ENCODE measurements at regions of chr20 and their contacts with region 1.

Region 1: DNA sequence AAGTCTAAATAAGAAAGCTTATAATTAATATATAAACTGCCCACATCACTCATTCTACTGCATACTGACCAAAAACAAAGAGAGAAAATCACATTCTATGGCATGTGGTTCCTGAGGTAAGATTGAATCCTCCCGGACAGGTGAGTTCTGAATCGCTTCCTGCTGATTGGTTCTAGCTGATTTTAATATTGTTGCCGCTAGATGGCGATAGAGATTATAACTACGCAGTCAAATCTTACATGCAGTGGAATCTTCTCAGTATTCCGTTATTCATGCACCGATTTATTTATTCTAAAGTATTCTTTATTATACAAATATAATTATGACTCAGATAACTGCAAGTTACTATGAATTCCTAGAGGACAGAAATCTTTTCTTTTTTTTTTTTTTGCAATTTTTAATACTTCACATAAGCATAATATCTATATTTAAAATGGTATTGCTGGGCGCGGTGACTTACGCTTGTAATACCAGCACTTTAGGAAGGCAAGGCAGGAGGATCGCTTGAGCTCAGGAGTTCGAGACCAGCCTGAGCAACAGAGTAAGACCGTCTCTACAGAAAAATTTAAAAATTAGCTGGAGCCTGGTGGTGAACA is 24.2 kb upstream of the TMX4 start:
- DNase-seq: peak; percentile 56
- H3K4me3 ChIP-seq: no peak overlapping the region
- H3K27ac ChIP-seq: no peak overlapping the region
- H3K4me1 ChIP-seq: peaks cover 24% of the 10 kb centered on the region
- H3K27me3 ChIP-seq: no peaks in the 10 kb centered on the region
- CTCF ChIP-seq: peak; percentile 38 to 50
- POLR2A ChIP-seq: no peak

Region 2: GRCh38 chr20:7897781-7898364 is 145.9 kb before region 1 on chr20:
- CTCF ChIA-PET with region 1: no interaction called
- POLR2A ChIA-PET with region 1: no interaction called
- dilution Hi-C with region 1: no loop called
- intact Hi-C with region 1: no loop called
- DNase-seq: no peak
- H3K4me3 ChIP-seq: no peak overlapping the region
- H3K27ac ChIP-seq: no peak overlapping the region
- H3K4me1 ChIP-seq: no peaks in the 10 kb centered on the region
- H3K27me3 ChIP-seq: no peaks in the 10 kb centered on the region
- CTCF ChIP-seq: no peak
- POLR2A ChIP-seq: no peak

Region 3: DNA sequence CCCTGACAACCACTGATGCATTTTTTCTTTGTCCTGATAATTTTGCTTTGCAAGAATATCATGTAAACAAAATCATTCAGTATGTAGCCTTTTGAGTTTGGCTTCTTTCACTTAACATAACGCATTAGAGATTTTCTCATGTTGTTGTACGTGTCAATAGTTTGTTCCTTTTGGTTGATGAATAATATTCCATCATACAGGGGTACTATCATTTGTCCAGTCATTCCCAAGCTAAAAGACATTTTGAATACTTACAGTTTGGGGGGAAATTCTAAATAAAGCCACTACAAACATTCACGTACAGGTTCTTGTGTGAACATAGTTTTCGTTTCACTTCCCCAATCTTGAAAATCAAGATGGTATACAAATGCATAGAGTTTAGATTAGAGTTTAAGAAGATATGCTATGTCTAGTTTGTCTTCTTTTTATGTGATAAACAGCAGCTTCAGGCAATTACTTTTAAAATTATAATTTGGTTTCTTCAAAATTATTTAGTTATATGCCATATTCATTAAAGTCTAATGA is 108.7 kb before region 1 on chr20:
- CTCF ChIA-PET with region 1: interaction called, 28 read pairs
- POLR2A ChIA-PET with region 1: no interaction called
- dilution Hi-C with region 1: no loop called
- intact Hi-C with region 1: no loop called
- DNase-seq: no peak
- H3K4me3 ChIP-seq: no peak overlapping the region
- H3K27ac ChIP-seq: no peak overlapping the region
- H3K4me1 ChIP-seq: peaks cover 10% of the 10 kb centered on the region
- H3K27me3 ChIP-seq: no peaks in the 10 kb centered on the region
- CTCF ChIP-seq: no peak
- POLR2A ChIP-seq: no peak

Region 4: DNA sequence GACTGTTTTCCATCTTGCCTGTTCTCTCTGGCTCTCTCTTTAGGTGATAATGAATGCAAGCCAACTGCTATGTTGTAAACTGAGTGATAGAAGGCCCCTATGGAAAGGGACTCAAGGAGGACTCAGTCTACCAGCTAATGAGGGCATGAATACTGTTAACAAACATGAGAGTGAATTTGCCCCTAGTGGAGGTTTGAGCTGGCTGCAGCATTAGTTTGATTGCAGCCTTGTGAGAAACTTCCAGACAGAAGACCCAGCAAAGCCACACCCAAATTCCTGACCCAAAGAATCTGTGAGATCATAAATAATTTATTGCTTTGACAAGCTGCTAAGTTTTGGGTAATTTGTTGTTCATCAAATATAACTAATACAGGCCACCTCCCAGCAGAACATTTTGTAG is 38.2 kb after region 1 on chr20:
- CTCF ChIA-PET with region 1: interaction called, 10 read pairs
- POLR2A ChIA-PET with region 1: no interaction called
- dilution Hi-C with region 1: no loop called
- intact Hi-C with region 1: no loop called
- DNase-seq: no peak
- H3K4me3 ChIP-seq: no peak overlapping the region
- H3K27ac ChIP-seq: no peak overlapping the region
- H3K4me1 ChIP-seq: peaks cover 12% of the 10 kb centered on the region
- H3K27me3 ChIP-seq: no peaks in the 10 kb centered on the region
- CTCF ChIP-seq: peak; percentile 15 to 23
- POLR2A ChIP-seq: no peak

Region 5: GRCh38 chr20:8389381-8390036 is 345.7 kb after region 1 on chr20:
- CTCF ChIA-PET with region 1: interaction called, 57 read pairs
- POLR2A ChIA-PET with region 1: interaction called, 4 read pairs
- dilution Hi-C with region 1: no loop called
- intact Hi-C with region 1: loop called (anchors 2 kb)
- DNase-seq: peak; percentile 61
- H3K4me3 ChIP-seq: no peak overlapping the region
- H3K27ac ChIP-seq: no peak overlapping the region
- H3K4me1 ChIP-seq: peaks cover 3% of the 10 kb centered on the region
- H3K27me3 ChIP-seq: no peaks in the 10 kb centered on the region
- CTCF ChIP-seq: peak; percentile 6 to 20
- POLR2A ChIP-seq: no peak

Region 6: DNA sequence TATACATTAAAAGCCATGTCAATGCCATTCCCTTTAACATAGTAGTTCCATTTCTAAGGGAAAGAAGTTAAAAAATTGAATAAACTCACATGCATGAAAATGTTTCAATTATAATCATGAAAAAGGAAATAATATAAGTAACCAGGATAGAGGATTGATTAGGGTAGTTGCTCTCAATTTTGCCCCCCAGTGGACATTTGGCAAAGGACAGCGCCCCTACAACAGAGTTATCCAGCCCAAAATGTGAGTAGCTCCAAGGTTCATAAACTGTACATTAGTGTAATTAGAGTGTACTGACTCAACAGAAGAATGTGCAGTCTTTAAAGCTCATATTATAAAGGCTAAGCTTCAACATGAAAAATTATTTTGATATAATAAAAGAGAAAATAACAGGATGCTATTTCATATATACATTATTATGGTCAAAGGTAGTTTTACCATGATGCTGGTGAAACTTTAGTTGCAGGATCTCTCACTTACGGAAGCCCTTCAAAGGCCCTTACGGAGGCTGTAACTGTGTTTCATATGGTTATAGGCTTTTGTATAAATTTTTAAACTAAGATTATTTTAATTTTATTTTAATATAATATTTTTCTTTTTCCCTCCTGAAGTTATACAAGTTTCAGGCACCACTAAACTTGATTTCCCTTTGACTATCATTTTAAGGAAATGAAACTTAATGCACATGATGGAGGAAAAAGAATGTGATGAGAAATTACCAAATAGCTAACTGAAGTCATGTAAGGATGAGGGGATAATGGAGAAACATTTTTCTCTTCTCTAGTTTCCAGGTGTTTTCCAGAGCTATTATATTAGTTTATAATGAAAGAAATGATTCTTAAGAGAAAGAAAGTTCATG is 491.8 kb after region 1 on chr20:
- CTCF ChIA-PET with region 1: interaction called, 22 read pairs
- POLR2A ChIA-PET with region 1: no interaction called
- dilution Hi-C with region 1: no loop called
- intact Hi-C with region 1: loop called (anchors 2 kb)
- DNase-seq: peak; percentile 29
- H3K4me3 ChIP-seq: no peak overlapping the region
- H3K27ac ChIP-seq: no peak overlapping the region
- H3K4me1 ChIP-seq: peaks cover 9% of the 10 kb centered on the region
- H3K27me3 ChIP-seq: no peaks in the 10 kb centered on the region
- CTCF ChIP-seq: peak; percentile 49 to 60
- POLR2A ChIP-seq: no peak